Calu3 (cell line): ENCODE measurements at regions of chr10 and their contacts with region 1.

Region 1: DNA sequence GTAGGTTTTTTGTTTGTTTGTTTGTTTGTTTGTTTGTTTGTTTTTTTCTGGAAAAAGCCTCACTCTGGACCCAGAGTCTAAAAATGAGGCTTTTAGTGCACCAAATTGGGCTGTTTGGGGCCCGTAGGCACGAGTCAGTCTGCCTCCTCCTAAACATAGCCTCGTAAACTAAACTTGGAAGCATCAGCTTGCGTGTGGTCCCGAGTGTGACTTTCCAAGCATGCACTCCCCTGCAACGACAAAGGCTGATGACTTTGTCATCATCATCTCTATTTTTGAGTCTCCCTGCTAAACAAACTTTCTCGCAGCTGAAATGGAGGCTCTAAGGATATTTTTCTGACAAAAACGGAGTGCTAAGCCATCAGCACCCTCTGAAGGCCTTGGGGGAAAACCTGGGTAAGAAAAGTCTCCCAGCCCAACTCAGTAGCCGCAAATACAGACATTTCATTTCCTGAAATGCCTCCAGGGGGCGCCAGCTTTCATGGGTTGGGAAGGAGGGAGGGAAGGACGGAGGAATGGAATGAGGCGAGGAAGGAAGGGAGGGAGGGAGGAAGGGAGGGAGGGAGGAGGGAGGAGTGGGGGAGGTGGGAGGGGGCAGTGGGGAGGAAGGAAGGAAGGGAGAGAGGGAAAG is 245.9 kb downstream of the KCNMA1 start:
- DNase-seq: peak; percentile 86
- H3K4me3 Mint-ChIP-seq: no peak overlapping the region
- H3K27ac Mint-ChIP-seq: no peak overlapping the region
- H3K4me1 Mint-ChIP-seq: peaks cover 9% of the 10 kb centered on the region
- H3K27me3 Mint-ChIP-seq: peaks cover 56% of the 10 kb centered on the region
- CTCF ChIP-seq: peak; percentile 35

Region 2: GRCh38 chr10:77173615-77174461 is 217.9 kb before region 1 on chr10:
- CTCF ChIA-PET with region 1: interaction called, 3 read pairs
- intact Hi-C with region 1: loop called (anchors 2 kb)
- DNase-seq: peak; percentile 83
- H3K4me3 Mint-ChIP-seq: no peak overlapping the region
- H3K27ac Mint-ChIP-seq: no peak overlapping the region
- H3K4me1 Mint-ChIP-seq: peaks cover 5% of the 10 kb centered on the region
- H3K27me3 Mint-ChIP-seq: no peaks in the 10 kb centered on the region
- CTCF ChIP-seq: peak; percentile 82

Region 3: DNA sequence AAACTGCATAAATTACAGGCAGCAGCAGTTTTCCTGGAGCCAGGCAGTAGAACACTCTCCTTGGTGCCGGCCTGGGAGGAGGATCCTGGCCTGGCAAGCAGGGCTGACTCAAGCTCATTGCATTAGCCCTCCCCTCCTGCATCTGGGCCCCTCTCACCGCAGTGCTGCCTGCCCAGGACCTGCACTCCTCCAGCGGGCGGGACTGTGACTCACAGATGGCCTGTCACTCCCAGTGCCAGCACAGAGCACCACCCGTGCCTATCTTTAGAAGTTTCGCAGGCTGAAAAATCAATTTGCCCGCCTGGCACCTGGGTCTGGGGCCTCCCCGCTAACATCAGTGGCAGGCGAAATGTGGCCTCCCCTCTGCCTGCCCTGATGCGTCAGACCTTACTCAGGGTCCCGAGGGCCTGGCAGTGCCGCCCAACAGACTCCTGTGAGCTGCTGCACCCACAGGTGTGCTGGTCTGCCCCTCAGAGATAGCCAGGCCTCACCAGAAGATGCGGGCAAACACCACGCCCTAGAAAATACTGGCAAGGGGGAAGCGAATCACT is 122.1 kb after region 1 on chr10:
- CTCF ChIA-PET with region 1: no interaction called
- intact Hi-C with region 1: loop called (anchors 5 kb)
- DNase-seq: peak; percentile 91
- H3K4me3 Mint-ChIP-seq: peak overlapping the region; percentile 33
- H3K27ac Mint-ChIP-seq: no peak overlapping the region
- H3K4me1 Mint-ChIP-seq: peaks cover 30% of the 10 kb centered on the region
- H3K27me3 Mint-ChIP-seq: peaks cover 12% of the 10 kb centered on the region
- CTCF ChIP-seq: no peak

Region 4: DNA sequence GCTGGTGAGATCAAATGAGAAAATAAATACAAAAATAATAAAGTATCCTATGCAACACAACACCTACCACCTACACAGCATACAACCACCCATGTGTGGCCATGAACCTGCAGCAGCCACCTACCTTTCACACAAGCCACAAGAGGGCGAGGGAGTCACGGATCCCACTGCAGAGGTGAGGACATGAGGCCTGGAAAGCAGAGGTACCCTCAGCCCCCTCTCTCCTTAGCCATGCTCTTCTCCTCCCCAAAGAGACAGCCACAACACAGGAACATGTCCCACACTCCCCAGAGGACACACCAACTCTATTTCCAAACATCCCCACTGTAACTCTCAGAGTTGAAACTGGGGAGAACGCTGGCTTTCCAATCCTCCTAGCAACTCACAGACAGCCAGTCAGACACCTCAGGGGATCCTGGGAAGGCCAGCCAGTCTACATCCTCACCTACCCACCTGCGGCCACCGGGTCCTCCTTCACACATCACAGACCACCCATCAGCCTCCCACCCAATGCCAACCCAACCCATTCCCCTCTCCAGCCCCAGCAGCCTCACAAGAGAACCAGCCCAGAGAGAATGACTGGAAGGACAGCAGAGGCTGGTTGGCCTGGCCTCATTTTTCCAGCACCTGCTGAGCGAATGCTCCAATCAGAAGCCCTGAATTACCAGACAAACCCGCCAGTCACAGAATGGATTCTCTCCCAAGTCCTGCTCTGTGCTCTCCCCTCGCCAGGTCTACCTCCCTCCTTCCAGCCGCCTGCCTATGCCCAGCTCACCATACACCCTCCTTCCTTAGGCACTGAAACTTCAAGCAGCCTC is 516.4 kb after region 1 on chr10:
- CTCF ChIA-PET with region 1: no interaction called
- intact Hi-C with region 1: no loop called
- DNase-seq: peak; percentile 36
- H3K4me3 Mint-ChIP-seq: no peak overlapping the region
- H3K27ac Mint-ChIP-seq: no peak overlapping the region
- H3K4me1 Mint-ChIP-seq: peaks cover 73% of the 10 kb centered on the region
- H3K27me3 Mint-ChIP-seq: no peaks in the 10 kb centered on the region
- CTCF ChIP-seq: peak; percentile 30